ENCODE measurements at regions of chr6 and their contacts with region 1.

Region 1: DNA sequence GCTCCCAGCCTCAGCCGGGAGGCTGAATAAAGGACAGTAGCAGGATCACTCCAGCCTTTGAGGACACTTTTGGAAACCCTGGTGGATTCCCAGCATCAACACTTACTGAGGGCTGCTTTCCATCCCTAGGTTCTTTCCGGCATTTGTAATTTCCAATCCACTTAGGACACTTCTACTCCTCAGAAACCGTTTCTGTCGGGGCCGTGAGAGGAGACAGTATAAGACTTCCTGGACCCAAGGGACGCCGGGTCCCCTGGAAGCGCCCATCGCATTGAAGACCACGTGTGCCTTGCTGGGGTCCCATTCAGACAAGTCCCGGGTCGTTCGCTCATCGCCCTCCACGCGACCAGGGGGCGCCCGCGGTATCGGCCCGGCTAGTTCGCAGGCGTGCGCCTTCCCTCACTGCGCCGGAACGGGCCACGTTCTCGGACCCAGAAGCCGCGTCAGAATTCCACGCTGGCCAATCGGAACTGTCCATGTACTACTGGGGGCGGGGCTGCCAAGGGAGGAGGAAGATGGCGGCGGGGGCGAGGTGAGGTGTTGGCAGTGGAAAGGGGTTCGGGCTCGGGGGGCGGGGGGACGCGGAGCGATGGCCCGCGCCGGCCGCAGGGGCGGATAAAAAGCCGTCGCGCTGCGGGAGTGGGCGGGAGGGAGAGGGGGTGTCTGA is at the start of gene NUS1:
- DNase-seq: peak; percentile 99
- total RNA-seq, gene NUS1: 36.3 to 42.8 TPM

Region 2: DNA sequence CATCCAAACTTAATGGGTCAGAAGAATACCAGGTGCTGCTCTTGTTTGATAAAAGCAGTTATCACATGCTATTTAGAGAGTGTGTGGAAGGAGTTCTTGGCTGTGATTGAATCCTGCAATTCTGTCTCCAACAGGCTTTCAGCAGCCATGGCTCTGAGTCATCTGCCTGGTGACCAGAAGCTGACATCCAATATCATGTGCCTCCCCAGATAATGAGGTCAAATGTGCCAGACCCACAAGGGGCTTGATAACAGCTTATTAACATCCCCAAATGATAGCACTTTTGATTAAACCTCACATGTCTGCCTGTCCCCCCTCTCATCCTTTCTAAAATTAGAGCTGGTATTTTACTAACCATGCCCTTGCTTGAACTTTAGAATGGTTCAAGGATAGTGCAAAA is 697.3 kb after region 1 on chr6:
- intact Hi-C with region 1: loop called in 1 of 2 experiments (anchors 5 kb)
- DNase-seq: no peak

Region 3: DNA sequence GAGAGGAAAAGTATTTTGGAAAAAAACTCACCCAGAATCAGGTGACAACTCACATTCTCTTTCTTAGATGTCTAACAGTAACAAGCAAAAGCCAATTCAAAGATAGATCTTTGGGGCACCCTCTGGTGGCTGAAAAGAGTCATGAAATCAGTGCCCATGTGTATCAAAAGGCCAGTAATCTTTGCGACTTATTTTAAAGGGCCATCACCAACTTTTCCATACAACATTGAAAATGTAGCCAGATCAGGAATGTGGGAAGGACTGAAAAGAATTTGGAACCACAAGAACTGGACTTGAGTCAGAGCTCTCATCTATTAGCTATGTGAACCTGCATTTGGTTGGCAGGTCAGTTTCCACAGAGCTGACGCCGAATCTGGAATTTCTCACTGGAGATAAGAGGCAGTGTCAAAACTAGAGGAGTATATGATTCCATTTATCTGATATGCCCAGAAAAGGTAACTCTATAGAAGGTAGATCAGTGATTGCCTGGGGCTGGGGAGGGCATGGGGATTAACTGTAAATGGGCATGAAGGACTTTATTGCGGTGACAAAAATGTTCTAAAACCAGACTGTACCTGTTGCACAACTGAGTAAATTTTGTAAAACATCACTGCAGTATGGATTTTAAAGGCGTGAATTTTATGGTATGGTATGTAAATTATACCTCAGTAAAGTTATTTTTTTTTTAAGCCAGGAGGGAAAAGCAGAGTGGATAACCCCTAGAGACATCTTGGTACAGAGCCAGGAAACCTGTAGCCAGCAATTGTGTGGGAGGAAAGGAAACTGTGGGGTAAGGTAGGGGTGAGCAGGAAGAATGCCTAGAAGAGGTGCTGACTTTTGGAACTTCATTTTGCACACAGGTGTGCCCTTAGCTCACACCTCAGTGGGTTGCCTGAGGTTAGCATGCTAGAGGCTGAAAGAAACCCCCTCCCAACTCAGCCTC is 1101.8 kb after region 1 on chr6:
- intact Hi-C with region 1: no loop called
- DNase-seq: no peak